HEK293T (cell line): ENCODE measurements at regions of chr13 and their contacts with region 1.

Region 1: DNA sequence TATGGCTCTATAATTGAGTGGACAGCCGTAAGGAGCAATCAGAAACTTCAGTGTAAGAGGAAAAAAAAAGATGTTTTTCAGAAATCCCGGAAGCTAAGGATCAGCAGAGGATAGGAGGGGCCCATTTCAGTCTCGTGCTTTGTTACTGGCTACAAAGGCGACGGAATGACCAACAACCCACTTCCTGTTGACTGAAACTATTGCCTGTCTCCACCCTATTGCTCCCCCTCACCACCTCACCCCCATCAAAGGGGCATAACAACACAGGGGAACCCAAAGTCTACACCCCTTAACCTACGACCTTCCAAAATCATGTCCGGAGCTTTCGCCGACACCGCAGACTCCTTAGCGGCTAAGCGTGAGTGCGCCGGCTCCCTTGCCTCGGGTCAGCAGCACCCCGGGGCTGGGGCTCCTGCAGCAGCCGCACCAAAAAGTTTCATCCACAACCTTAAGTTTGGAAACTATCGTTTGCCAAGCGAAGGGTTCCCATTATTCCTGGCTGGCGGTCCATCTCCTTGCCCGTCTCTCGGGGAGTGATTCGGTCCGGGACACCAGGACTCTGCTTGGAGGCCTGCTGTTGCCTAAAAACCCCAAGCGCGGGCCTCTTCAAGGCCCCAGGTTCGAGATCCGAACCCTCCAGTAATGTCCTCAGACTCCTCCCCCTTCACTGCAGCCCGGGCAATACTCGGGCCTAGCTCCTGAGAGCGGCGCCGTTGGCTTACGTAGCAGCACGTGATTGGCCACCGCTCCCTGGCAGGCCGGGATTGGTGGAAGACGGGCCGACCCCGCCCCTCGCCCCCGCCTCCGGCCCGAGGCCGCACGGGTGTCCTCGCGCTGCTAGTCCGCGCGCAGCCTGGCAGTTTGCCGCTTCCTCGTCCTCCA is at the start of gene TPP2:
- DNase-seq: peak; percentile 88

Region 2: GRCh38 chr13:102460801-102461200 is 135.6 kb before region 1 on chr13:
- CTCF ChIA-PET with region 1: no interaction called
- POLR2A ChIA-PET with region 1: no interaction called
- DNase-seq: no peak

Region 3: DNA sequence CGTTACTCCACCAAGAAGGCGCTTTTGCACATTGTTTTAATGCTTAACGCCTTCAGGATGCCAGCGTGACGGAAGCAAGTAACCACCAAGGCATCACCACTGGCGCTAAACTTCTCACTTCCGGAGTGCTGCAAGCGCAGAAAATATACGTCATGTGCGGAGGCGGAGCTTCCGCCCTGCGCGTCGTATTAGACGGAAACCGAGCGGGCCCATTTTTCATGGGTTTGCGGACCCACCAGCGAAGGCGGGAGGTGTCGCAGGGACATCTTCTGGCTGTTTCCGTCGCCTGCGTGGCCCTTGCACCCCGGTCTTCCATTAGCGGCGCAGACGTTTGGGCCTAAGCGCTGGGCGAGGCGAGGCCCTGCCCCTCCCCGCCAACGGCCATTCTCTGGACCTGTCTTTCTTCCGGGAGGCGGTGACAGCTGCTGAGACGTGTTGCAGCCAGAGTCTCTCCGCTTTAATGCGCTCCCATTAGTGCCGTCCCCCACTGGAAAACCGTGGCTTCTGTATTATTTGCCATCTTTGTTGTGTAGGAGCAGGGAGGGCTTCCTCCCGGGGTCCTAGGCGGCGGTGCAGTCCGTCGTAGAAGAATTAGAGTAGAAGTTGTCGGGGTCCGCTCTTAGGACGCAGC is 249.4 kb after region 1 on chr13 and contains the start of gene ERCC5:
- CTCF ChIA-PET with region 1: interaction called, 5 read pairs
- POLR2A ChIA-PET with region 1: interaction called, 15 read pairs
- DNase-seq: peak; percentile 69